Adrenal gland (tissue), 19 donors: ENCODE measurements at regions of chr16 and their contacts with region 1.

Region 1: DNA sequence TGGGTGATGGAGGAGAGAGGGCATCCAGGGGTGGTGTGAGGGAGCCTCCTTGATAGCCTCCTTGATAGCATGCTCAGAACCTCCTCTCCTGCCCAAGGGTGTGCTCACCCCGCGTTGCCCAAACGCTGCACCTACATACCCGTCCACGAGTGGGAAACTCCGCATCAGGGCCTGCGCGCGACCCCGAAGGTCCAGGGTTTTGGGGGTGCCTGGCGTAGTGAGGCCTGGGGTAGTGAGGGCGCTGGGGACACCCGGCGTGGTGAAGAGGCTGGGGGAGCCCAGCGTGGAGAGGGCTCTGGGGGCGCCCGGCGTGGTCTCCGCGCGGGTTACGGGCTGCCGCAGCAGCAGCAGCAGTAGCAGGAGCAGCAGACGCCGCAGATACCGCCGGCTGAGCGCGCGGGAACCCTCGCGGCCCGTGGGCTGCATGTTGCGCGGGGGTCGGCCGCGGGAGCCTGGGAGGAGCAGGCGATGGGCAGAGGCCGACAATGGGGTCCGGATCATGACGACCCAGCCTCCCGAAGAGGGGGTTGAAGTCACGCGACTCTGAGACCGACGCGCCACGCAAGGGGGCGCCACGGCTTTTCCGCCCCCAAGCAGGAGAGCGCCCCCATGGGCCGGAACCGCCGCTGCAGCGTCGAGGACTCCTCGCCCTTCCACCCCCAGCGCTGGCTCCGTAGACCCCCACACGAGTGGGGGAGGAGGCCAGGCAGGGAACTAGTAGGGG is at the start of gene DPEP3:
- DNase-seq: no peak
- H3K4me3 ChIP-seq: no peak within 1 kb of the TSS
- H3K27ac ChIP-seq: no peak within 1 kb of the TSS
- H3K4me1 ChIP-seq: peaks cover 0 to 15% of the 10 kb centered on the region in 2 donors
- H3K27me3 ChIP-seq: no peaks in the 10 kb centered on the region
- CTCF ChIP-seq: no peak
- POLR2A ChIP-seq: no peak
- total RNA-seq, gene DPEP3: 0.11 TPM in 1 of 9 donors, not detected in the others

Region 2: DNA sequence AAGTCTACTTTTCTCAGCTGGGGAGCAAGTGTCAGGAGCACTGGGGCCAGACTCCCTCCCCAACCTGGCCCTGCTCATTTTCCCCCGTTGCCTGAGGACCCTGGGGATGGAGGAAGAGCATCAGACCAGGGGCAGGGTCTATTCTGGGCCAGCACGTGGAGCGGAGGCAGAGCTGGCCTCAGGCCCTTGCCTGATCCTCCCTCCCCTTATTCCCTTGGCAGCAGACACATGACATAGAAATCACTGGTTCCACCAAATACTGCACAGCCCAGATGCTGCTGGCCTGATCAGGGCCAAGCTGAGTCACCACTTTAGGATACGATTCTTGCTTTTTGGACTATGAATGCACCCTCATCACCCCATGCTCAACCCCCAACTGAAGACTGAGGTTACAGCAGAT is 481.0 kb before region 1 on chr16:
- intact Hi-C with region 1: loop called in 1 of 2 experiments (anchors 5 kb)
- DNase-seq: no peak
- H3K4me3 ChIP-seq: no peak overlapping the region
- H3K27ac ChIP-seq: no peak overlapping the region
- H3K4me1 ChIP-seq: no peaks in the 10 kb centered on the region
- H3K27me3 ChIP-seq: no peaks in the 10 kb centered on the region
- CTCF ChIP-seq: no peak
- POLR2A ChIP-seq: no peak